BJ (cell line): ENCODE measurements at regions of chr1 and their contacts with region 1.

Region 1: DNA sequence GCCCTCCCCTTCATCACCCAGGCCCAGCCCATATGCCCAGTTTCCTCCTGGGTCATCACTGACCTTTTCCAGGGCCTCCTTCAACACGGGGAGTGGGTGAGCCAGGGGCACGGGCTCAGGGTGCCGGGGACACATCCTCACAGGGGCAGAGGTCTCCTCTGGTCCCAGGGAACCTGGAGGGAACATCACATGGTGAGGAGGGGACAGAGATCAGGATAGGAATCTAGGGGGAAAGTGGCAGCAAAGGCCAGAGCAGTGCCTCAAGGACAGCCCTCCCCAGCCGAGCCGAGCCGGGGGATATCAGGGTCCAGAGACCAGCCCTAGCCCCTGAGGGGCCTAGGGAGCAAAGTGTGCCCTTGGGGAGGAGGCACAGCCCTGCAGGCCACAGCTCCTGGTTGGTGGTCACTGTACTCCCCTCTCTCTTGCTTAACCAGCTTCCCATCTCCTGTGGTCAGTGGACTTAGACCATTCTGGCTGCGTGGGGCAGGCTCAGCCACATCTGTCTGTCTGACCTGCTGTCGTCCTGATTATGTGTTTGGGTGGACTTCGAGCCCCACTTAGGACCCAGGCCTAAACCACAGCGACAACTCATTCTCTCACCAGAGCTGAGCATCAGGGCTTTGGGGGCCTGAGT is 9.5 kb downstream of the LACTBL1 start:
- DNase-seq: no peak
- H3K4me3 ChIP-seq: no peak overlapping the region
- H3K27me3 ChIP-seq: peaks cover 7% of the 10 kb centered on the region
- CTCF ChIP-seq: no peak

Region 2: GRCh38 chr1:22949822-22950331 is 13.3 kb before region 1 on chr1:
- CTCF ChIA-PET with region 1: interaction called, 18 read pairs
- POLR2A ChIA-PET with region 1: no interaction called
- DNase-seq: no peak
- H3K4me3 ChIP-seq: no peak overlapping the region
- H3K27me3 ChIP-seq: peaks cover 12% of the 10 kb centered on the region
- CTCF ChIP-seq: no peak

Region 3: DNA sequence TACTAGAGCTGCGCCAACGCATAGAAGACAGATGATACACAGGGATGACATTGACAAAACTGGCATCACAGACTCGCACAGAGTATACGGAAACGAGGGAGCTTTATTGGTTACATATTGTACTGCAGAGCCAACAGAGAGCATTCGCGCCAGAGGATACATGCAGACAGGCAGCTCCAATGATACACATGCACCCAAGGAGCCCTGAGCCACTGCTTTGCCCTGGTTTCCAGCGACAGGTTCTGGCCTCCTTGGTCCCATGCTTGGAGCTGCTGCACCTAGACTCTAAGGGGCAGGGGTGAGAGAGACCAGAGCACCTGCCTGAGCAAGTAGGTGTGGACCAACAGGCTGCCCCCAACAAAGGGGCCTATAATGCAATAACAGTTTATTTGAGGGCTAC is 121.7 kb after region 1 on chr1:
- CTCF ChIA-PET with region 1: no interaction called
- POLR2A ChIA-PET with region 1: no interaction called
- DNase-seq: no peak
- H3K4me3 ChIP-seq: no peak overlapping the region
- H3K27me3 ChIP-seq: no peaks in the 10 kb centered on the region
- CTCF ChIP-seq: no peak